ENCODE measurements at regions of chr20 and their contacts with region 1.

Region 1: GRCh38 chr20:35166242-35166830 is 5.5 kb upstream of the PROCR start:
- DNase-seq: no peak
- ATAC-seq: no peak
- H3K4me3 ChIP-seq: no peak overlapping the region
- H3K4me3 Mint-ChIP-seq: no peak overlapping the region
- H3K27ac ChIP-seq: no peak overlapping the region
- H3K27ac Mint-ChIP-seq: no peak overlapping the region
- H3K4me1 ChIP-seq: peaks cover 0 to 10% of the 10 kb centered on the region in 2 experiments
- H3K4me1 Mint-ChIP-seq: peaks cover 11 to 22% (median 13%) of the 10 kb centered on the region in 3 donors
- H3K27me3 ChIP-seq: no peaks in the 10 kb centered on the region
- H3K27me3 Mint-ChIP-seq: no peaks in the 10 kb centered on the region

Region 2: DNA sequence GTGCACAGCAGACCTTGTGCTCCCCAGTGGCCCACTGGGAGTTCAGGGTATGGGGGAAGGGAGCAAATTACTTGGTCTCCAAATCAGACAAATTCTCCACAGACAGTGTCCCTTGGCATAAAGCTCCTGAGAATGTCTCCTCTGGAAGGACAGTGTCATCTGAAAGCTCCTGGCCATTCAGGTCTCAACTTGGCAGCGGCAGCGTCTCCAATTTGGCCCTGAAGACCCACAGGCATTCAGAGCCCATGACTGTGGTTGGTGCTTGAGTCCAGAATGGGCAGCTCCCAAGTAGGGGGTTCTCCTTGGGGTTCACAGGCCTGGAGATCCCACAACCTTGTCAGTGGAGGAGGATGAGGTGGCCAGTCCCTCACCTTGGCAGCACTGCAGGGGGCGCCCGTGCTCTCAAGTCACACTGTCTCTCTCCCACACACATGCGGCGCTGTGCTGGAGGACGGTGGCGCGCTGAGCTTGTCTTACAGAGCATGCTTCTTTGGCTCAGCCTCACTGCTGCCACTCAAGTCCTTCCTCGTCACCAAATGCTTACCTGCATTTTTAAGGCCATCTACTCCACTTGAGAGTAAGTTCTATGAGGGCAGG is 629.4 kb before region 1 on chr20:
- CTCF ChIA-PET with region 1: no interaction called
- POLR2A ChIA-PET with region 1: interaction called in 1 of 2 experiments, 11 read pairs
- DNase-seq: peak in 21 of 35 experiments; percentile 22 to 56 (median 35)
- ATAC-seq: peak; percentile 49 to 53 (median 50)
- H3K4me3 ChIP-seq: no peak overlapping the region
- H3K4me3 Mint-ChIP-seq: no peak overlapping the region
- H3K27ac ChIP-seq: no peak overlapping the region
- H3K27ac Mint-ChIP-seq: peak overlapping the region in 1 of 2 donors; percentile 64
- H3K4me1 ChIP-seq: peaks cover 0 to 18% of the 10 kb centered on the region in 2 experiments
- H3K4me1 Mint-ChIP-seq: peaks cover 15 to 26% (median 16%) of the 10 kb centered on the region in 3 donors
- H3K27me3 ChIP-seq: no peaks in the 10 kb centered on the region
- H3K27me3 Mint-ChIP-seq: no peaks in the 10 kb centered on the region

Region 3: GRCh38 chr20:35092524-35093266 is 73.6 kb before region 1 on chr20 and contains the start of gene TRPC4AP:
- CTCF ChIA-PET with region 1: interaction called in 1 of 2 experiments, 4 read pairs
- POLR2A ChIA-PET with region 1: interaction called in 1 of 2 experiments, 14 read pairs
- DNase-seq: peak; percentile 77 to 95 (median 85)
- ATAC-seq: peak; percentile 97 to 99 (median 97)
- H3K4me3 ChIP-seq: peak within 1 kb of the TSS; percentile 88 to 91
- H3K4me3 Mint-ChIP-seq: peak within 1 kb of the TSS; percentile 86 to 98 (median 87)
- H3K27ac ChIP-seq: peak within 1 kb of the TSS; percentile 67
- H3K27ac Mint-ChIP-seq: peak within 1 kb of the TSS; percentile 92 to 95
- H3K4me1 ChIP-seq: peaks cover 11 to 36% of the 10 kb centered on the region in 2 experiments
- H3K4me1 Mint-ChIP-seq: peaks cover 40 to 51% (median 51%) of the 10 kb centered on the region in 3 donors
- H3K27me3 ChIP-seq: no peaks in the 10 kb centered on the region
- H3K27me3 Mint-ChIP-seq: no peaks in the 10 kb centered on the region
- total RNA-seq, gene TRPC4AP: 56.3 to 65.5 (median 63.5) TPM

Measured in T-cell (primary cell).